PC-9 (cell line): ENCODE measurements at regions of chr17 and their contacts with region 1.

Region 1: DNA sequence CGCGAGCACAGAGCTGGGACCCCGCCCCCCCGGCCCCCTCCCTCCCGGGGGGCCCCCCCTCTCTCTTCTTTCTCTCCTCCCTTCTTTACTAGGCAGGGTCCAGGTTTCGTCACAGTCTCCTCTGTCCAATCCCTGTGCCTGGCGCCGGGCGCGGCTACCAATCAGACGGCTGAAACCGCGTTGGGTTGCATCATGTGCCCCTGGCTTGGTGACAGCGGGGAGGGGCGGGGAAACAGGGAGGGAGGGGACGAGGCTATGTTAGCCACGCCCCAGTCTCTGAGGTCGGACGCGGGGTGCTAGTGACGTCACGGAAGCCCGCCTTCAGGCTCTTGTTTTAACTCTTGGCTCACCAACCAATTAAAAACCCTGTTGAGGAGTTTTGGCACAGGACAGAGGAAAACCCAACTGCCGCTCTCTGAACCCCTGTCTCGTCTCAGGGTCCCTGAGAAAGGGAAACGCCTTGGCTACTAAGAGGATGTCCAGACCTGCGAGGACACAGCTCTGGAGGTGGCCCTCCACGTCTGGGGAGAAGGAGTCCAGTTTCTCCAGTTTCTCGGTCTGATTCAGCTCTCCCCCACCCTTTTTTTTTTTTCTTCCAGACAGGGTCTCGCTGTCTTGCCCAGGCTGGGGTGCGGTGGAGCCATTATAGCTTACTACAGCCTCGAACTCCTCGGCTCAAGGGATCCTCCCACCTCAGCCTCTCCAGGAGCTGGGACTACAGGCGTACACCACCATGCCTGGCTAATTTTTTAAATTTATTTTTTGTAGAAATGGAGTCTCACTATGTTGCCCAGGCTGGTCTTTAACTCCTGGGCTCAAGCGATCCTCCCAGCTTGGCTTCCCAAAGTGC is 439 bp upstream of the PLEKHH3 start:
- DNase-seq: peak; percentile 94 to 98
- H3K4me3 ChIP-seq: peak overlapping the region; percentile 95
- H3K27ac ChIP-seq: peak overlapping the region; percentile 61
- H3K4me1 ChIP-seq: peaks cover 46% of the 10 kb centered on the region
- H3K27me3 ChIP-seq: no peaks in the 10 kb centered on the region
- CTCF ChIP-seq: no peak

Region 2: GRCh38 chr17:42422958-42423712 is 254.1 kb before region 1 on chr17 and contains the start of gene CAVIN1:
- CTCF ChIA-PET with region 1: no interaction called
- POLR2A ChIA-PET with region 1: no interaction called
- intact Hi-C with region 1: loop called (anchors 5 kb)
- DNase-seq: peak; percentile 82 to 97
- H3K4me3 ChIP-seq: peak within 1 kb of the TSS; percentile 76
- H3K27ac ChIP-seq: 0 out of 2 replicates have a peak within 1 kb of the TSS, but pooled peaks have one; percentile 12
- H3K4me1 ChIP-seq: peaks cover 43% of the 10 kb centered on the region
- H3K27me3 ChIP-seq: no peaks in the 10 kb centered on the region
- CTCF ChIP-seq: no peak
- total RNA-seq, gene CAVIN1: 154 and 170 TPM in 2 replicates

Region 3: DNA sequence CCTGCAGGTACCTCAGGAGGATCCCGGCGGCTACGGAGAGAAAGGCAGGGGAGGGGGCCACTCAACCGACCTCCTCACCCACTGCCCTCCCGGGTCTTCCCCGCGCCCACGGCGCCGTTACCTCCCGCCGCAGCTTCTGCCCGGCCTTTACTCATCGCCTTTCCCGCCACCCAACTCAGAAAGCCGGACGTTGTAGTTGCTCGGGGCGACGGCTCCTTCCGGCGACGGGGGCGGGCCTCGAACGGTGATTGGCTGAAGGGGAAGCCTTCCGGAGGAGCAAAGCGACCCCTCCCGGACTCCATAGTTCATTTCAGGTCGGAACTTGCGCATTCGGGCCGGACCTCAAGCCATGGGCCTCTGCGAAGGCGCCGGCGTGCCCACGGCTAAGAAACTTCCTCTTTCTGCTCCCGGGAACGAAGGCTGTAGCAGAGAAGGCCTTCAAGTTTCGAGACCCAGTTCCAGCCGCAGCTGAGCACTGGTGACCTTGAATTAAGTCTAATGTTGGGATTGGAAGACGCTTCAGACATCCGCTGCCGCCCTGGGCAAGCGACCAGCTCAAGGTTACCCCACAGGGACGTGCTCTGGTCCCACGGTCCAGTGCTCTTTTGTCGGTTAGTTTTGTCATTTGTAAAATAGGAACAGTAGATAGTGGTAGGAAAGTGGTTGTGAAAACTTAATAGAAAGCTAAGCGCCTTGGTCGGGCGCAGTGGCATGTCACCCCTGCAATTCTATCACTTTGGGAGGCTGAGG is 99.5 kb before region 1 on chr17 and contains the start of gene PSMC3IP:
- CTCF ChIA-PET with region 1: interaction called, 12 read pairs
- POLR2A ChIA-PET with region 1: interaction called, 3 read pairs
- intact Hi-C with region 1: loop called (anchors 1 kb)
- DNase-seq: peak; percentile 84 to 91
- H3K4me3 ChIP-seq: peak within 1 kb of the TSS; percentile 94
- H3K27ac ChIP-seq: peak within 1 kb of the TSS; percentile 31
- H3K4me1 ChIP-seq: peaks cover 17% of the 10 kb centered on the region; the same call in 1 of the 2 replicates
- H3K27me3 ChIP-seq: no peaks in the 10 kb centered on the region
- CTCF ChIP-seq: peak; percentile 53
- total RNA-seq, gene PSMC3IP: 10.2 and 13.4 TPM in 2 replicates

Region 4: DNA sequence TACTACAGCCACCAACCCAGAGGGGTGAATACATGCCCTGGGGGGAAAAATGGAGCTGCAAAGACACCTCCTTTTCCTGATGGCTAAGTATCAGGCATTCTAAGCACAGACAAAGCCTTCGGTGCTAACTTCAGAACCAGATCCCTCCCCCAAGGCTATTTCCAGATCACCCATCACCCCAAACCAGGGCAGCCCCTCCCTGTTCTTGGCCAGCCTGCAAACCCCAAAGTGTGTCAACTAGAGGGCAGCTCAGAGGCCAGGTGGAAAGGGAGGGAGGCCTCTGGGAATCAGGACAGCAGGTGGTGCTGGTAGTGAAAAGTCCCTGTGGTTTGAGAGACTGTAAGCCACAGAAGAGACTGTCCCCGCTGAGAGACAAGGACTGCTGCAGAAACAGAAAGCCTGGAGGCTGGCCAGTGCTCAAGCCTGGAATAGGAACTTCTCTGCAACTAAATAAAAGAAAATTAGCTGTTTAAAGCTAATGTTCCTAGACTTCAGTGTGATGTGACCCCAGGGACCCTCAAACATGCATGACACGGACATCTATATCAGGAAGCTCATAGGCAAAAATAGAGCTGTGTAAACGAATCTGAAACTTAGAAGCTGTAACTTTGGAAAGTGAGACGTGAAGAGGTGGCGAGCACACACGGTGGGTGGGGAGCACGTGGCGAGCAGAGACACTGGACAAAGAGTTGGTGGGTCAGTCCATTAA is 58.6 kb before region 1 on chr17:
- CTCF ChIA-PET with region 1: interaction called, 8 read pairs
- POLR2A ChIA-PET with region 1: interaction called, 5 read pairs
- intact Hi-C with region 1: loop called (anchors 1 kb)
- DNase-seq: peak; percentile 79
- H3K4me3 ChIP-seq: no peak overlapping the region
- H3K27ac ChIP-seq: 0 out of 2 replicates have a peak overlapping the region, but pooled peaks have one; percentile 24
- H3K4me1 ChIP-seq: peaks cover 27% of the 10 kb centered on the region
- H3K27me3 ChIP-seq: no peaks in the 10 kb centered on the region
- CTCF ChIP-seq: peak; percentile 59; the same call in 1 of the 2 replicates

Region 5: GRCh38 chr17:42964161-42964932 is 287.1 kb after region 1 on chr17 and contains the start of gene AARSD1:
- CTCF ChIA-PET with region 1: interaction called, 11 read pairs
- POLR2A ChIA-PET with region 1: no interaction called
- intact Hi-C with region 1: no loop called
- DNase-seq: peak; percentile 87 to 93
- H3K4me3 ChIP-seq: peak within 1 kb of the TSS; percentile 96
- H3K27ac ChIP-seq: peak within 1 kb of the TSS; percentile 83
- H3K4me1 ChIP-seq: peaks cover 8% of the 10 kb centered on the region; the same call in 1 of the 2 replicates
- H3K27me3 ChIP-seq: no peaks in the 10 kb centered on the region
- CTCF ChIP-seq: no peak
- total RNA-seq, gene AARSD1: 32.6 and 35.4 TPM in 2 replicates